PC-9 (cell line): ENCODE measurements at regions of chr12 and their contacts with region 1.

Region 1: GRCh38 chr12:14769969-14770495 is 33.2 kb downstream of the WBP11 start:
- DNase-seq: peak; percentile 77 to 90
- H3K4me3 ChIP-seq: peak overlapping the region; percentile 99
- H3K27ac ChIP-seq: peak overlapping the region; percentile 83
- H3K4me1 ChIP-seq: peaks cover 27% of the 10 kb centered on the region
- H3K27me3 ChIP-seq: no peaks in the 10 kb centered on the region
- CTCF ChIP-seq: peak; percentile 87

Region 2: GRCh38 chr12:14365294-14366208 is 404.5 kb before region 1 on chr12 and contains the start of gene ATF7IP:
- CTCF ChIA-PET with region 1: no interaction called
- POLR2A ChIA-PET with region 1: interaction called, 6 read pairs
- intact Hi-C with region 1: loop called (anchors 5 kb)
- DNase-seq: peak; percentile 94 to 95
- H3K4me3 ChIP-seq: peak within 1 kb of the TSS; percentile 90
- H3K27ac ChIP-seq: peak within 1 kb of the TSS; percentile 89
- H3K4me1 ChIP-seq: peaks cover 23% of the 10 kb centered on the region
- H3K27me3 ChIP-seq: no peaks in the 10 kb centered on the region
- CTCF ChIP-seq: no peak; the same call in 1 of the 2 replicates
- total RNA-seq, gene ATF7IP: 72.2 and 94.7 TPM in 2 replicates

Region 3: DNA sequence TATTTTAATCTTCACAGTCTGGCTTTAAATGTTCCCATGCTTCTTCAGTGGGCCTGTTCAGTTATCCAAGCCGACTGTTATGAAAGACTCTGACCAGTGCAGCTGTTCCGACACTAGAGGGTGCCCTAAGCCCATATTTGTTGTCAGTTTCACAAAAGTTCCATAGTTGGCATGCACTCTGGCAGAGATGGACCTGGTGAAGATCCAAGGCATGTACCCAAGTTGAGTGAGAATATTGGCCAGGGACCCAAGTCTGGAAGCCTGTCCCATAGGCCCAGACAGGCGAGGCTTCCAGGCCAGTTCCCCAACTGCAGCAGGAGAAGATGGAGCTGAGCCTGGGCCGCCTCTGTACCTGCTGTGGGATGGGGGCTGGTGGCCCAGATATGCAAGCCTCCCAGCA is 46.3 kb before region 1 on chr12:
- CTCF ChIA-PET with region 1: no interaction called
- POLR2A ChIA-PET with region 1: interaction called, 3 read pairs
- intact Hi-C with region 1: loop called (anchors 2 kb)
- DNase-seq: peak; percentile 36 to 50
- H3K4me3 ChIP-seq: no peak overlapping the region
- H3K27ac ChIP-seq: no peak overlapping the region
- H3K4me1 ChIP-seq: no peaks in the 10 kb centered on the region
- H3K27me3 ChIP-seq: no peaks in the 10 kb centered on the region
- CTCF ChIP-seq: peak; percentile 83

Region 4: DNA sequence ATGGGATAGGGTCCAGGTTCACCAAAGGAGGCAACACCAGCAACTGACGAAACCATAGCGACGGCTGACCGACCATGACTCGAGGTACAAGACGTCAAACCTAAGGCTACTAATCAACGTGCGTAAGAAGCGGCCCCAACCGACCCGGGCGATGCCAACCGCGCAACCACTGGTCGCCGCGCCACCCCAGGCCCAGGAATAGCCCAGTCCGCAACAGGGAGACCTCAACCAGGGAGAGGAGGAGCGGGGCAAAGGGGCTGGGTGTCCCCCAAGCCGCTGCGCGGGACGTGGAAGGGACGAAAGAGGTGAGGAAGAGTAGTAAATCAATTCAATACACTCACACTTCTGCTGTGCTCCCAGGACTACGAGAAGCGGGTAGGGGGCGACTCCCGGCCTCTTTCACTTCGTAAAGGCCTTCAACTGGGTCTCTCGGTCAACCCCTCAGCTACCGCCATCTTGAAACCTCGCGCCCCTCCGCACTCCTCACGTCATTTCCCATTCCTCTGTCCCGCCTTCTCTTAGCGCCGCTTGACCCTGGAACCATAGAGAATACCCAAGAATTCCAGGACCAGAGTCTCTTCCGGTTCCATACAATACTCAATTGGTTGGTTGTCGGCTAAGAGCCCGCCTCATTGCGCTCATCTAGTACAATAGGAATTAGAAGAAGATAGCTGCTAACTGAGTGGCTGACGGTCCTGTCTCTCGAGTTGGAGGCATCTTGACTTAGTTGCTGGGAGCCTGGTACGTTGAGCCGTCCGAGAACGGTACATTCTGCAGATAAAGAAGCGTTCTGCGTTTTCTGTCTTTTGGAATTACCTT is 33.2 kb after region 1 on chr12 and contains the starts of genes C12orf60 and WBP11:
- CTCF ChIA-PET with region 1: interaction called, 5 read pairs
- POLR2A ChIA-PET with region 1: interaction called, 21 read pairs
- intact Hi-C with region 1: loop called (anchors 1 kb)
- DNase-seq: peak; percentile 94 to 99
- H3K4me3 ChIP-seq: peak within 1 kb of the TSS; percentile 96
- H3K27ac ChIP-seq: peak within 1 kb of the TSS; percentile 58
- H3K4me1 ChIP-seq: peaks cover 23% of the 10 kb centered on the region
- H3K27me3 ChIP-seq: no peaks in the 10 kb centered on the region
- CTCF ChIP-seq: no peak
- total RNA-seq, gene C12orf60: 3.3 and 4.0 TPM in 2 replicates
- total RNA-seq, gene WBP11: 65.8 and 124 TPM in 2 replicates

Region 5: DNA sequence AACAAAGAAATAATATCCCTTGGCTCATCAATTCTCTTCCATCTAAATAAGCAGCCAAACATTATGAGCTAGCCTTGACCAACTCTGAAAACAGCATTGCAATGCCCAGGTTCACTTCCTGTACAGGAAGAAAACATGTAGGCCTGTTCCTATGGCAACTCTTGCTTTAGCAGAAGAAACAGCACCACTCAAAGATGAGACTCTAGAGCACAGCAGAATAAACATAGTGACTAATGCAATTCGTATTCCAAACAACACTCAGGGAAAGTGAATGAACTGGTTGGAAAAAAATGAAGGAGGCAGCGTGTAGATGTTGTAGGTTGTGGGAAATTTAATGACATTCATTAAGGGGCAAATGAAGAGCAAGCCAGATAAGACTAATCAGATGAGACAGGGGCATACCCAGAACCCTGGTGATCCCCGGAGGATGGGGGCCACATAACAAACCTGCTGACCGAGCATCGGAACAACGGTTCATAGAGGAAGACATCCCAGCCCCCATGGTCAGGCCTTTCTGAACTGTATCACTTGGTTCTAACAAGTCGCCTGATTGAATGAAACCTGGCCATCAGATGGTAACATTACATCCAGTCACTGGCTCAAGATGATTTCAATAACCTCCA is 182.4 kb after region 1 on chr12:
- CTCF ChIA-PET with region 1: no interaction called
- POLR2A ChIA-PET with region 1: no interaction called
- intact Hi-C with region 1: loop called (anchors 2 kb)
- DNase-seq: peak; percentile 64 to 98
- H3K4me3 ChIP-seq: 0 out of 2 replicates have a peak overlapping the region, but pooled peaks have one; percentile 0
- H3K27ac ChIP-seq: peak overlapping the region; percentile 83
- H3K4me1 ChIP-seq: peaks cover 72% of the 10 kb centered on the region
- H3K27me3 ChIP-seq: no peaks in the 10 kb centered on the region
- CTCF ChIP-seq: no peak

Region 6: GRCh38 chr12:15882118-15882971 is 1112.3 kb after region 1 on chr12 and contains the start of gene STRAP:
- CTCF ChIA-PET with region 1: no interaction called
- POLR2A ChIA-PET with region 1: interaction called, 8 read pairs
- intact Hi-C with region 1: loop called (anchors 10 kb)
- DNase-seq: peak; percentile 94 to 98
- H3K4me3 ChIP-seq: peak within 1 kb of the TSS; percentile 88
- H3K27ac ChIP-seq: peak within 1 kb of the TSS; percentile 95
- H3K4me1 ChIP-seq: peaks cover 35% of the 10 kb centered on the region
- H3K27me3 ChIP-seq: no peaks in the 10 kb centered on the region
- CTCF ChIP-seq: no peak
- total RNA-seq, gene STRAP: 164 and 205 TPM in 2 replicates